Right cardiac atrium (tissue), 5 donors: ENCODE measurements at regions of chr21 and their contacts with region 1.

Region 1: GRCh38 chr21:41460578-41461527 is 34.8 kb downstream of the MX1 start:
- DNase-seq: peak; percentile 80 to 91 (median 88)
- ATAC-seq: peak; percentile 88 to 91
- H3K4me3 ChIP-seq: no peak overlapping the region
- H3K27ac ChIP-seq: no peak overlapping the region
- H3K4me1 ChIP-seq: no peaks in the 10 kb centered on the region
- H3K27me3 ChIP-seq: no peaks in the 10 kb centered on the region

Region 2: GRCh38 chr21:41121785-41122421 is 338.9 kb before region 1 on chr21:
- intact Hi-C with region 1: loop called in 2 of 4 experiments (anchors 5 kb)
- DNase-seq: peak; percentile 84 to 95 (median 90)
- ATAC-seq: peak; percentile 85 to 89
- H3K4me3 ChIP-seq: no peak overlapping the region
- H3K27ac ChIP-seq: no peak overlapping the region
- H3K4me1 ChIP-seq: no peaks in the 10 kb centered on the region
- H3K27me3 ChIP-seq: no peaks in the 10 kb centered on the region

Region 3: GRCh38 chr21:41283211-41283818 is 177.5 kb before region 1 on chr21:
- intact Hi-C with region 1: loop called (anchors 5 kb)
- DNase-seq: no peak
- ATAC-seq: peak; percentile 88 to 92
- H3K4me3 ChIP-seq: no peak overlapping the region
- H3K27ac ChIP-seq: no peak overlapping the region
- H3K4me1 ChIP-seq: no peaks in the 10 kb centered on the region
- H3K27me3 ChIP-seq: no peaks in the 10 kb centered on the region

Region 4: DNA sequence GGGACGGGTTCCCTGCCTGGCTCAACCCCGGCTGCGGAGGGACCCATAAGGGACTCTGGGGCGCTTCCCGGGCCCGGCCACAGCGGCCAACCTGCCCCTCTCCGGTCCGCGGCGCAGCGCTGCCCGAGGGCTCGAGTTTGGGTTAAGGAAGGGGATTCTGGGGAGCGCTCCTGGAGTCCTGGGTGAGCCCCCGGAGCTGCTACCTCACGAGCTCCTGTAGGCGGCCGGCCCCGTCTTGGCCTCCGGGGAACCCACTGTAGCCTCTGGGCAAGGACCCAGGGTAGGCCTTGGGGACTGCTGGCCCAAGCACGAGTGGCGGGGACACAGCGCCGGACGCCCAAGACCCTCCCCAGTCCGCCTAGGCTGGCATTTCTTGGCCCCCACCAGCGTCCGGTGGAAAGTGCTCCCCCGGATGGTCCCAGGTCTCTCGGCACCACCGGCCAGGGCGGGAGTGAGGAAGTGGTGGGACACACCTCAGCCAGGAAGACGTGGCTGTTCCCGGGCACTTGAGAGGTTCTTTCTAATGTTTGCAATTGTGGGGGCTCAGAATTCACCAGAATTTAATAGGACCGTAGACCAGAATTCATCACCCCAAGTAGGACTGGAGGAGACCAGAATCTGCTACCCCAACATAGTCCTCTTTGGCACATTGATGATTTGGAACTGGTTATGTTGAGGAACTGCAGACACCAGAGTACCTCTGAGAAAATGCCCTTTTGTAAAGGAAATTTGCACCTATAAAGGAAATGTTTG is 47.6 kb after region 1 on chr21:
- intact Hi-C with region 1: no loop called
- DNase-seq: no peak
- ATAC-seq: peak; percentile 7 to 47
- H3K4me3 ChIP-seq: peak overlapping the region; percentile 30
- H3K27ac ChIP-seq: no peak overlapping the region
- H3K4me1 ChIP-seq: no peaks in the 10 kb centered on the region
- H3K27me3 ChIP-seq: no peaks in the 10 kb centered on the region